Naive thymus-derived CD4-positive, alpha-beta T cell (primary cell): ENCODE measurements at regions of chr17 and their contacts with region 1.

Region 1: DNA sequence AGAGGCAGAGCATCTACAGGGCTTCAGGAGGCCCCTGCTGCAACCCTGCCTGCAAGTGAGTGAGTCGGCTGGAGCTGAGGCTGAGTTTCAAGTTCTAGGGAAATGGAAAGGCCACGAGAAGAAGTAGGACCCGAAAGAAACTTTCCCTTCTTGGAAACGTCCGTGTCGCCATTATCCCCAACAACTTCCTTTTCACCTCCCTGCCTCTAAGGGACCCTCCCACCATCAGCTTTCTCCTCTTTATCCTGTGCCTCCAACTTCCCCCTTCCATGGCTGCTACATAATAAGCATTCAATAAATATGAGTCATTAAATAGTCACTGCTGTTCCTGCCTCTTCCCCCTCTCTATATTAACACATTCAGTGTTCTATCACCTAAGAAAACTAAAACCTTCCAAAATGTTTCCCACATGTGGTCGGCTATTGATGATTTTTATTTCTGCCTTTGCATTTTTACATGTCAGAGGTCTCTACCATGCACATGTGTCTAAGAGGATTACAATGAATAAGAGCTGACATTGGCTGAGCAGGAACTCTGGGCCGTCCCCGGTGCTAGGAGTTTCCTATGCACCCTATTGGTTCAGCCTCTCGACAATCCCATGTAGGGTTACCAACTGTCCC is 115.9 kb upstream of the TNRC6C start:
- DNase-seq: no peak
- ATAC-seq: peak; percentile 52
- H3K4me3 ChIP-seq: no peak overlapping the region
- H3K4me3 Mint-ChIP-seq: peak overlapping the region in 6 of 10 donors; percentile 0 to 63 (median 44)
- H3K27ac ChIP-seq: no peak overlapping the region
- H3K27ac Mint-ChIP-seq: peak overlapping the region in 6 of 9 donors; percentile 0 to 90 (median 10)
- H3K4me1 ChIP-seq: peaks cover 38 to 44% of the 10 kb centered on the region in 2 donors
- H3K4me1 Mint-ChIP-seq: peaks cover 28 to 61% (median 51%) of the 10 kb centered on the region in 7 donors
- H3K27me3 ChIP-seq: no peaks in the 10 kb centered on the region
- H3K27me3 Mint-ChIP-seq: peaks cover 0 to 2% (median 0%) of the 10 kb centered on the region in 5 donors

Region 2: GRCh38 chr17:77779711-77780539 is 62.7 kb before region 1 on chr17:
- CTCF ChIA-PET with region 1: no interaction called
- POLR2A ChIA-PET with region 1: no interaction called
- intact Hi-C with region 1: loop called (anchors 5 kb)
- DNase-seq: no peak
- ATAC-seq: no peak
- H3K4me3 ChIP-seq: no peak overlapping the region
- H3K4me3 Mint-ChIP-seq: no peak overlapping the region
- H3K27ac ChIP-seq: no peak overlapping the region
- H3K27ac Mint-ChIP-seq: no peak overlapping the region
- H3K4me1 ChIP-seq: peaks cover 13 to 22% of the 10 kb centered on the region in 2 donors
- H3K4me1 Mint-ChIP-seq: peaks cover 7 to 14% (median 10%) of the 10 kb centered on the region in 7 donors
- H3K27me3 ChIP-seq: no peaks in the 10 kb centered on the region
- H3K27me3 Mint-ChIP-seq: peaks cover 0 to 4% (median 0%) of the 10 kb centered on the region in 5 donors

Region 3: DNA sequence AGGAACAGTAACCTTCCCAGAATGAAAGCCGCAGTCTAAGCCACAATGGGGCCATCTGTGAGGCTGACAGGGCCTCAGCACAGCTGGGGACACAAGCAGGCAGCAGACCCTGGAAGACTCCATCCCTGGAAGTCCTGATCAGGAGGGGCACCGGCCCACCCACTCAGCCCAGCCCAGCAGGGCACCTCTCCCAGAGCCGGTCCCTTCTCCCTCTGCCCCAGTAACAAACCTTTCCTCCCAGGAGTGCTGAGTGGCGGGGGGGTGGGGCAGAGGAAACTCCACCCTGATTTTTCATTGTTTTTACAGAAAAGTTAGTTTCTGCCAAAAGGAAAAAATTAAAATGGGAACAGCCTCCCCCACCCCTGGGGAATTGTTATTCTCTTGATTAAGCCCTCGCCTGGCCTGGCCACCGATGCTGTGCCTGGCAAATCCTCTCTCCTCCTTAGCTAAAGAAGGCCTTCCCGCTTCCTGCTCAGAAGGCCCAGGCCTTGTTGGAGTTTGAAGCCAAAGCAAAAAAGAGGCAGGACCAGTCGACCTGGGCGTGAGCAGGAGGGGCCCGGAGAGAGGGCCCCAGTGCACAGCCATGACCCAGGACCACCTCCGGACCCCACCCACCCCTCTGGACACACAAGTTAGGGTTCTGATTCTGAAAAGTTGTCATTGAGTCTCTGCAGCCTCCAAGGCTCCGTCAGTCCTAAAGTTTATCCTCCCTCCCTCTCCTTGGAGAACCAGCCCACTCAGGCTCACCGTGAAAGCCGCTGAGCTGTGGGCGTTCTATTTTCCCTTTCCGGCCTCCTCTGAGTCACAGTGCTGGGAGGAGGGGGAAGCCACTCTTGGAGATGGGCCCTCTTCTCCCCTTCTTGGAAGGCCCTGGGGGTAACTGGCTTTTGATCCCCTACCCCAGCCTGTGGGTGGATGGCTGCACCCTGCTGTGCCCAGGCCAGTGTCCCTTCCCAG is 12.5 kb before region 1 on chr17:
- CTCF ChIA-PET with region 1: no interaction called
- POLR2A ChIA-PET with region 1: no interaction called
- intact Hi-C with region 1: no loop called
- DNase-seq: no peak
- ATAC-seq: peak; percentile 30
- H3K4me3 ChIP-seq: no peak overlapping the region
- H3K4me3 Mint-ChIP-seq: peak overlapping the region in 2 of 10 donors; percentile 35 to 66
- H3K27ac ChIP-seq: no peak overlapping the region
- H3K27ac Mint-ChIP-seq: peak overlapping the region in 1 of 9 donors; percentile 21
- H3K4me1 ChIP-seq: peaks cover 9 to 10% of the 10 kb centered on the region in 2 donors
- H3K4me1 Mint-ChIP-seq: peaks cover 18 to 46% (median 32%) of the 10 kb centered on the region in 7 donors
- H3K27me3 ChIP-seq: no peaks in the 10 kb centered on the region
- H3K27me3 Mint-ChIP-seq: peaks cover 0 to 26% (median 0%) of the 10 kb centered on the region in 5 donors